ENCODE measurements at regions of chr12 and their contacts with region 1.

Region 1: GRCh38 chr12:113479590-113480335 is 8.1 kb upstream of the LHX5 start:
- DNase-seq: peak; percentile 55

Region 2: DNA sequence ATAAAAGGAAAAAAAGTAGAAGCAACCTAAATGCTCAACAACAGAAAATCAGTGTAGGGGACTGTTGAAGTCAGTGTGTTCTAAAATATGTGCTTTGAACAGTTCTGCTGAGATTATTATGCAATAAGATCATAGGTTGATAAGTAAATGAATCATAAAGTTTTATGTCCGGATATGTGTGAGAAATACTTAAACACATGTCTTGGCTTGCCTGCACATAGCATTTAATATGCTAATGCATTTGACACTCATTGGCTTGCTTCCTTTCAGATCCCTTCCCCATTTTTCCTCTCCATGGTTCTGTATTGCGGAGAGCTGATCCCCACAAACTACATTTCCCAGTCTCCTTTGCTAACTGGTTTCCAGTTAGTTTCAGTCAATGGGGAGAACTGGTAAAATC is 1778.0 kb after region 1 on chr12:
- intact Hi-C with region 1: loop called in 1 of 2 experiments (anchors 5 kb)
- DNase-seq: no peak